HepG2 (cell line): ENCODE measurements at regions of chr7 and their contacts with region 1.

Region 1: DNA sequence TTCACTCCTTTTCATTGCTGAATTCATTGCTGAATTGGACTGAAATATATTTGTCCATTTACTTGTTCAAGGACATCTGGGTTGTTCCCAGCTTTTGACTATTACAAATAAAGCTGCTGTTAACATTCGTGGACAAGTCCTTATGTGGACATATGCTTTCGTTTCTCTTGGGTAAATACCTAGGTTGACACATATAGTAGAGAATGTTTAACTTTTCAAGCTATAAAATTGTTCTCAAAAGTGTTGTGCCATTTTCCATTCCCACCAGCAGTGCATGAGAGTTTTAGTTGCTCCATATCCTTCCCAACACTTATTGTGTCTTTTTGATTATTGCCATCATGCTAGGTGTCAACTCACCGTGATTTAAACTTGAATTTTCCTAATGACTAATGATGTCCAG is 17.5 kb upstream of the CPVL start:
- DNase-seq: peak; percentile 92
- ATAC-seq: peak; percentile 96
- H3K4me3 ChIP-seq: peak overlapping the region in 1 of 3 experiments; percentile 3; a peak in 1 of 6 replicates
- H3K27ac ChIP-seq: no peak overlapping the region
- H3K4me1 ChIP-seq: peaks cover 16% of the 10 kb centered on the region
- H3K27me3 ChIP-seq: no peaks in the 10 kb centered on the region
- CTCF ChIP-seq: no peak
- EP300 ChIP-seq: 0 out of 4 replicates have a peak, but pooled peaks of 1 of the 2 experiments have one; percentile 49
- POLR2A ChIP-seq: no peak
- RAD21 ChIP-seq: no peak

Region 2: GRCh38 chr7:29146057-29146706 is 17.7 kb before region 1 on chr7 and contains the start of gene CPVL:
- CTCF ChIA-PET with region 1: no interaction called
- POLR2A ChIA-PET with region 1: interaction called, 19 read pairs
- in situ Hi-C with region 1: no loop called
- intact Hi-C with region 1: no loop called
- DNase-seq: peak; percentile 71
- ATAC-seq: peak; percentile 84
- H3K4me3 ChIP-seq: peak within 1 kb of the TSS; percentile 75 to 85 (median 78)
- H3K27ac ChIP-seq: peak within 1 kb of the TSS; percentile 68
- H3K4me1 ChIP-seq: peaks cover 66% of the 10 kb centered on the region
- H3K27me3 ChIP-seq: no peaks in the 10 kb centered on the region; a peak in 1 of 5 replicates
- CTCF ChIP-seq: no peak
- EP300 ChIP-seq: no peak
- POLR2A ChIP-seq: peak; percentile 69 to 73
- RAD21 ChIP-seq: no peak
- total RNA-seq, gene CPVL: 30.7 and 59.2 TPM in 2 replicates

Region 3: DNA sequence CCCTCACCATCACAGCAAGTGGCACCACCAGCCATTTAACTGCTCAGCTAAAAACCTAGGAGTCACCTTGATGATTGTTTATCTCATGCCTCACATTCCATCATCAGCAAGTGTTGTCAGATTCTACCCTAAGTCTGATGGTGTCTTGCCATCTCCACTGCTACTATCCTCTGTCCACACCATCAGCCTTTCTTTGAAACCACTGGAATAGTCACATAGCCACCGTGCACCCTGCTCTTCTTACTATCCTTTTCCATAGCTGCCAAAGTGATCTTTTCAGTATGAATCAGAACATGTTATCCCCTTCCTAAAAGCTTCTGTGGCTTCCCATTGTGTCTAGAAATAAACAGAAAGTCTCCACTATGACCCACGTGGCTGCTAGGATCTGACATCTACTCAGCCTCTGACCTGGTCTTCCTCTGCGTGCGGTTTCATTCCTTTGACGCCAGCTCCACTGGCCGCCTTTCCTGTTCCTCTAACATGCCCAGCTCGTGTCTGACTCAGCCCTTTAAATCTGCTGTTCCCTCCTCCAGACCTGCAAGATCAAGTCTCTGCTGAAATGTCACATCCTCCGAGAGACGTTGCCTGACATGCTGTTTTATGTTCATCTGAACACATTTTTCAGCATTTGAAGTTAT is 14.2 kb after region 1 on chr7:
- CTCF ChIA-PET with region 1: no interaction called
- POLR2A ChIA-PET with region 1: no interaction called
- in situ Hi-C with region 1: no loop called
- intact Hi-C with region 1: no loop called
- DNase-seq: no peak
- ATAC-seq: no peak
- H3K4me3 ChIP-seq: no peak overlapping the region
- H3K27ac ChIP-seq: no peak overlapping the region
- H3K4me1 ChIP-seq: no peaks in the 10 kb centered on the region
- H3K27me3 ChIP-seq: no peaks in the 10 kb centered on the region
- CTCF ChIP-seq: no peak
- EP300 ChIP-seq: no peak
- POLR2A ChIP-seq: no peak
- RAD21 ChIP-seq: no peak